Right cardiac atrium (tissue), 5 donors: ENCODE measurements at regions of chr7 and their contacts with region 1.

Region 1: DNA sequence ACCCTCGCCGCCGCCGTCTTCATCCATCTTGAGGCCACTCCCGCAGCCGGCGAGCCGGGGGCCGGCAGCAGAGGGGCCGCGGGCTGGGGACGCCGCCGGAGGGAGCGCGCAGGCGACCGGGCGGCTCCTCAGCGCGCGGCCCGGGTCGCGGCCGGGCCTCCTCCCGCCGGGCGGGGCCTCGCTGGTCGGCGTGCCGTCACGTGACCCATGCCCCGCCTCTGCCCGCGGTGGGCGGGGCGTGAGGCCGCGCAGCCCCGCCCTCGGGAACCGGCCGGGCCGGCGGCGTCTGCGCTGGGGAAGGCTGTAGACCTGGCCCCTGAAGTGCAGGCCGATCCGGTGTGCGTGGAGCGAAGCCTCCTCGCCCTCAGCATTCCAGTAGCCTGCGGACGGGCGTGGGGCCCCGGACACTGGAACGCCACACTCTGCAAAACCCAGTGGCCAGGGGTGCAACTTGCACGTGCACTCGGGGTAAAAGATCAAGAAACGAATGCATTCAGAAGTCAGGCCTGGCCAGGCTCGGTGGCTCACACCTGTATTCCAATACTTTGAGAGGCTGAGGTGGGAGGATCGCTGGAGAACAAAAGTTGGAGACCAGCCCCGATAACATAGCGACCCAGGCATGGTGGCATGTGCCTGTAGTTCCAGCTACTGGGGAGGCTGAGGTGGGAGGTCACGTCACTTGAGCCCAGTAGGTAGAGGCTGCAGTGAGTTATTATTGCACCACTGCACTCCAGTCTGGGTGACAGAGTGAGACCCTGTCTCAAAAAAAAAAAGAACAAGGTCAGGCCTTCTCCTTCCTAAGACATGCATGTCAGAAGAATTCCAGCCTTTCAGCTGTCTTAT is at the start of gene CYTH3:
- DNase-seq: peak; percentile 81 to 93 (median 91)
- ATAC-seq: peak; percentile 93 to 95
- H3K4me3 ChIP-seq: peak within 1 kb of the TSS; percentile 96
- H3K27ac ChIP-seq: peak within 1 kb of the TSS; percentile 8
- H3K4me1 ChIP-seq: peaks cover 9% of the 10 kb centered on the region
- H3K27me3 ChIP-seq: no peaks in the 10 kb centered on the region
- total RNA-seq, gene CYTH3: 27.2 to 40.2 (median 32.0) TPM

Region 2: DNA sequence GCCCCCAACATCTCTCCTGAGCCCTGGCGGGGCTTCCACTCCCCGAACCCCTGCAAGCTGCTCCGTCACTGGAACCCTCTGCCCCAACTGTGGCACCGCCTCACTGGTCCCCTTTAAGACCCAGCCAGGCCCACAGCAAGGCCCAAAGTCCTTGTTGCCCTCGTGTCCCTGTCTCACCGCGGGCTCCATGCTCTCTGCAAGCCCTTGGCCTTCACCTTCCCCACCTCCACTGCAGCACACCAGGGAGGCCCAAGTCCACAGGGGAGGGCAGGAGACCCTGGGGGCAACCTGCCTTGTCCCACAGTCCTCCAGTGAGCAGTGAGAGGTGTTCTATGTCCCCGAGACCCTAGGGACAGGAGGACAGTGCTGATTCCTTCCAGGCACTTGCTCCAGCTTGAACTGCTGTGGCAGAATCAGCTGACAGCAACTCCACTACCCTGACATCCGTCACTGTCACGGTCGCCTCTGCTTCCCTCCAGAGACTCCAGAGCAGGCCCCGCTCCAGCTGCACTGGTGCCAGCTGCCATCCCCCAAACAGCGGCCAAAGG is 105.6 kb before region 1 on chr7:
- intact Hi-C with region 1: loop called in 3 of 4 experiments (anchors 5 to 10 kb)
- DNase-seq: peak in 2 of 3 donors; percentile 76 to 78
- ATAC-seq: peak; percentile 31 to 65
- H3K4me3 ChIP-seq: no peak overlapping the region
- H3K27ac ChIP-seq: no peak overlapping the region
- H3K4me1 ChIP-seq: peaks cover 4% of the 10 kb centered on the region
- H3K27me3 ChIP-seq: no peaks in the 10 kb centered on the region

Region 3: GRCh38 chr7:6409991-6410693 is 137.4 kb after region 1 on chr7:
- intact Hi-C with region 1: no loop called
- DNase-seq: peak in 1 of 3 donors; percentile 41
- ATAC-seq: peak; percentile 7 to 26
- H3K4me3 ChIP-seq: no peak overlapping the region
- H3K27ac ChIP-seq: no peak overlapping the region
- H3K4me1 ChIP-seq: no peaks in the 10 kb centered on the region
- H3K27me3 ChIP-seq: no peaks in the 10 kb centered on the region